Activated naive CD4-positive, alpha-beta T cell treated with anti-CD3 and anti-CD28 coated beads for 36 hours (primary cell): ENCODE measurements at regions of chrX and their contacts with region 1.

Region 1: DNA sequence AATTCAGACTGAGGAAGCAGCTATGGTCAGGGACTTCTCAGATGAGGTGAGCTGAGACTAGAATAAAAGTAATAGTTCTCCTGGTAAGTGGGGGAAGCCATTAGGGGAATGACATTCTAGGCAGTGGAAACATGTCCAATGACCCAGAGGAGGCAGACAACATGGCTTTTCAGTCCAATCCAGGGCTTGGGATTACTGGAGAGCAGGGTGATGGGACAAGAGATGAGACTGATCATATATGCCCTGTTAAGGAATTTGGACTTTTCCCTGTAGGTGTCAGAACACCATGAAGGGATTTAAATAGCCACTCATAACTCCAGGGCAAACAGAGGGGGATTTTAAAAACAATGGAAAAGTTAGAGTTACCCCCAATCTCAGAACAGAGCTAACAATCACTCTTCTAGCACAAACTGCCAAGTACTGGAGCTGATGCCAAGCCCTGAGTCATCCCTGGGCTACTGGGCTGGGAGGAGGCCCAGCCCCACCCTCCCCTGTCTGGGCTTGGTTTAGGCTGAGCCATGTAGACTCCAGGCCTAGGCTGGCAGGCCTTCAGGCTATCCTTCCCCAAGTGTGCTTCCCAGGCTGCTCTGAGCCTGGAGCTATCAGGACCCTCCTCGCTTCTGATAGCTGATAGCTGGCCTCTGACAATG is 22.7 kb upstream of the MSN start:
- DNase-seq: peak; percentile 44
- H3K4me3 Mint-ChIP-seq: no peak overlapping the region
- H3K27ac Mint-ChIP-seq: no peak overlapping the region
- H3K4me1 Mint-ChIP-seq: peaks cover 30% of the 10 kb centered on the region
- H3K27me3 Mint-ChIP-seq: no peaks in the 10 kb centered on the region

Region 2: DNA sequence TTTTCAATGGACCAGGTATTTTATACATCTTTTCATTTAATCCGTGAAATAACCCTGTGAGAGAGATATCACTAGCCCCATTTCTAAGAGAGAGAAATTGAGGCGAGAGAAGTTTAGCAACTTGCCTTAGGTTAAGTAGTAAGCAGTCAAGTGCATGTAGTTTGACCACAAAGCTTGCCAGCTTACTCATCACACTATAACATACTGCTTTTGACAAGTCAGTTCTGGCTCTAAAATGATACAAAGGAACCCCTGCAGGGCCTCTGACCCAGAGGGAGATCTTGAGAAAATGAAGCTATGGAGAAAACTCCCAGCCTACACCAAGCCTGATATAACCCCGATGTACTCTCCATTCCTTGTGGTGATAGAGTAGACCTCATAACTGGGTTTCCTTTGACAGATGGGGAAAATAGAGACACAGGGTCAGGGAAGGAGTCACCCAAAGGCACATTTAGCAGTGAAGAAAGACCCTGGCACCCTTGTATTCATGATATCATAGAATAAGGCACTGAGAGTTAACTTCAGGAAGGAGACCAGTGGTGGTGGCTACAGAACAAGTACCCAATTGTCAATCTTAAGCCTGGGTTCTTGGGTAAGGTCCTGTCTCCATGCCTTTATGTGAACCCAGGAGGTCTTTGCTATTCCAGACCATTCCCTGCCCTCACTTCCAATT is 37.5 kb before region 1 on chrX:
- CTCF ChIA-PET with region 1: interaction called, 4 read pairs
- intact Hi-C with region 1: loop called (anchors 2 kb)
- DNase-seq: peak; percentile 46
- H3K4me3 Mint-ChIP-seq: no peak overlapping the region
- H3K27ac Mint-ChIP-seq: peak overlapping the region; percentile 68
- H3K4me1 Mint-ChIP-seq: peaks cover 66% of the 10 kb centered on the region
- H3K27me3 Mint-ChIP-seq: no peaks in the 10 kb centered on the region

Region 3: GRCh38 chrX:65658229-65658628 is 13.5 kb after region 1 on chrX:
- CTCF ChIA-PET with region 1: no interaction called
- intact Hi-C with region 1: loop called (anchors 2 kb)
- DNase-seq: no peak
- H3K4me3 Mint-ChIP-seq: no peak overlapping the region
- H3K27ac Mint-ChIP-seq: peak overlapping the region; percentile 74
- H3K4me1 Mint-ChIP-seq: peaks cover 39% of the 10 kb centered on the region
- H3K27me3 Mint-ChIP-seq: no peaks in the 10 kb centered on the region

Region 4: DNA sequence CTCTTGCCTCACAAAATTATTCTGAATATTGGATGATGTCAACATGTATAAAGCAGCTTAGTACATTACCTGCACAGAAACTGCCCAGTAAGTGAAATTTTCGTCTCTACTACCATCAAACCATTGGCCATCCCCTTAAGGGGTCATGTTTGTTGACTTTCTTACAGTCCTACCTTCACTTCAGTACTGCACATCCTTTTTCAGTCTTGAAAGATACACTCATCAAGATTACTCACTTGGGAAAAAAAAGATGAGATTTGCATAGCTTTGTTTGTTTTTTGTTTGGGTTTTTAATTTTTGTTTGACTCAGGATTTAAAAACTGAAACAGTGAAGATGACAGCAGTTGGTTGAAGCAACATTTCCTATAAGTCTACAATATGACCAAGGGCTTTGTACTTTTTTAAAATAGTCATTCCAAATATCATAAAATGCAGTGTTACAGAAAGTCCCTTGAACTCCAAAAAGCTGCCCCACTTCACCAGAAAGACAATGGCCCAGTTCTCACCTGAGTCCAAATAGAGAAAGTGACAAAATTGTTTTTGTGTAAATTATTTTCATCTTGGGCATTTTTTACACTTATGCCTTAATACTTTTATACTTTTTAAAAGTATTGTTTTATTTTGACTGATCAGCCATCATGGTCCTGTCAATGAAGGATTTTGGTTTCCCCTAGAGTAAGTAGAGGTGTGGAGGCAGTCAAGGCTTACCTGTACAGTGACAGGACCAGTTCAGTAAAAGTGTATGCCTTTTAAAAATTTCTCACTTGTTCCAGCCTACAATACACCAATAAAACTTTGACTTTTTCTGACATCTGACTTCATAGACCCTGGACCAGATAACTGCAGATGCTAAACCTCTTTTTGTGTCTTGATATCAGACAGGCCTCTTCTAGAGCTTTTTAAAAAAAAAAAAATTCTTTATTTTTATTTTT is 1053.8 kb after region 1 on chrX:
- CTCF ChIA-PET with region 1: no interaction called
- intact Hi-C with region 1: no loop called
- DNase-seq: no peak
- H3K4me3 Mint-ChIP-seq: no peak overlapping the region
- H3K27ac Mint-ChIP-seq: no peak overlapping the region
- H3K4me1 Mint-ChIP-seq: no peaks in the 10 kb centered on the region
- H3K27me3 Mint-ChIP-seq: peaks cover 3% of the 10 kb centered on the region